Mammary epithelial cell (primary cell): ENCODE measurements at regions of chr9 and their contacts with region 1.

Region 1: GRCh38 chr9:2837915-2838314 is 6.0 kb downstream of the PUM3 start:
- DNase-seq: no peak
- H3K4me3 ChIP-seq: no peak overlapping the region
- H3K27ac ChIP-seq: no peak overlapping the region
- H3K4me1 ChIP-seq: peaks cover 18% of the 10 kb centered on the region
- H3K27me3 ChIP-seq: no peaks in the 10 kb centered on the region
- CTCF ChIP-seq: peak; percentile 15 to 42

Region 2: GRCh38 chr9:2151171-2151570 is 686.7 kb before region 1 on chr9:
- CTCF ChIA-PET with region 1: no interaction called
- dilution Hi-C with region 1: no loop called
- in situ Hi-C with region 1: no loop called
- intact Hi-C with region 1: no loop called
- DNase-seq: no peak
- H3K4me3 ChIP-seq: no peak overlapping the region
- H3K27ac ChIP-seq: no peak overlapping the region
- H3K4me1 ChIP-seq: peaks cover 17% of the 10 kb centered on the region
- H3K27me3 ChIP-seq: no peaks in the 10 kb centered on the region
- CTCF ChIP-seq: no peak

Region 3: GRCh38 chr9:2241836-2242741 is 595.8 kb before region 1 on chr9:
- CTCF ChIA-PET with region 1: no interaction called
- dilution Hi-C with region 1: no loop called
- in situ Hi-C with region 1: loop called in 1 of 2 experiments (anchors 25 kb)
- intact Hi-C with region 1: loop called (anchors 5 kb)
- DNase-seq: peak; percentile 86
- H3K4me3 ChIP-seq: peak overlapping the region; percentile 30 to 52 (median 49)
- H3K27ac ChIP-seq: peak overlapping the region; percentile 22
- H3K4me1 ChIP-seq: peaks cover 9% of the 10 kb centered on the region
- H3K27me3 ChIP-seq: no peaks in the 10 kb centered on the region
- CTCF ChIP-seq: no peak

Region 4: DNA sequence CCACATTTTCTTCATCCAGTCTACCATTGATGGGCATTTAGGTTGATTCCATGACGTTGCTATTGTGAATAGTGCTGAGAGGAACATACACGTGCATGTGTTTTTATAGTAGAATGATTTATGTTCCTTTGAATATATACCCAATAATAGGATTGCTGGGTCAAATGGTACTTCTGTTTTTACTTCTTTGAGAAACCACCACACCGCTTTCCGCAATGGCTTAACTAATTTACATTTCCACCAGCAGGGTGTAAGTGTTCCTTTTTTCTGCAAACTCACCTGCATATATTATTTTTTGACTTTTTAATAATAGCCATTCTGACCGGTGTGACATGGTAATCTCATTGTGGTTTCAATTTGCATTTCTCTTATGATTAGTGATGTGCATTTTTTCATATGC is 770.1 kb after region 1 on chr9:
- CTCF ChIA-PET with region 1: no interaction called
- dilution Hi-C with region 1: no loop called
- in situ Hi-C with region 1: no loop called
- intact Hi-C with region 1: no loop called
- DNase-seq: no peak
- H3K4me3 ChIP-seq: no peak overlapping the region
- H3K27ac ChIP-seq: no peak overlapping the region
- H3K4me1 ChIP-seq: no peaks in the 10 kb centered on the region
- H3K27me3 ChIP-seq: no peaks in the 10 kb centered on the region
- CTCF ChIP-seq: no peak